CD4-positive, alpha-beta T cell (primary cell): ENCODE measurements at regions of chr3 and their contacts with region 1.

Region 1: GRCh38 chr3:125357032-125357658 is 18.0 kb downstream of the ZNF148 start:
- DNase-seq: peak; percentile 35 to 81 (median 52)
- ATAC-seq: peak; percentile 98
- H3K4me3 ChIP-seq: peak overlapping the region; percentile 55
- H3K4me3 Mint-ChIP-seq: peak overlapping the region; percentile 72
- H3K27ac ChIP-seq: peak overlapping the region in 1 of 2 donors; percentile 61
- H3K27ac Mint-ChIP-seq: peak overlapping the region; percentile 75
- H3K4me1 ChIP-seq: peaks cover 26% of the 10 kb centered on the region
- H3K4me1 Mint-ChIP-seq: peaks cover 77% of the 10 kb centered on the region
- H3K27me3 ChIP-seq: no peaks in the 10 kb centered on the region
- H3K27me3 Mint-ChIP-seq: no peaks in the 10 kb centered on the region
- CTCF ChIP-seq: no peak

Region 2: GRCh38 chr3:125310623-125311081 is 46.5 kb before region 1 on chr3:
- CTCF ChIA-PET with region 1: no interaction called
- POLR2A ChIA-PET with region 1: interaction called, 6 read pairs
- intact Hi-C with region 1: loop called in 1 of 2 experiments (anchors 5 kb)
- DNase-seq: peak; percentile 10 to 66 (median 38)
- ATAC-seq: peak; percentile 90
- H3K4me3 ChIP-seq: peak overlapping the region; percentile 52
- H3K4me3 Mint-ChIP-seq: peak overlapping the region; percentile 91
- H3K27ac ChIP-seq: peak overlapping the region; percentile 30 to 63
- H3K27ac Mint-ChIP-seq: peak overlapping the region; percentile 98
- H3K4me1 ChIP-seq: peaks cover 9% of the 10 kb centered on the region
- H3K4me1 Mint-ChIP-seq: peaks cover 58% of the 10 kb centered on the region
- H3K27me3 ChIP-seq: no peaks in the 10 kb centered on the region
- H3K27me3 Mint-ChIP-seq: no peaks in the 10 kb centered on the region
- CTCF ChIP-seq: no peak

Region 3: DNA sequence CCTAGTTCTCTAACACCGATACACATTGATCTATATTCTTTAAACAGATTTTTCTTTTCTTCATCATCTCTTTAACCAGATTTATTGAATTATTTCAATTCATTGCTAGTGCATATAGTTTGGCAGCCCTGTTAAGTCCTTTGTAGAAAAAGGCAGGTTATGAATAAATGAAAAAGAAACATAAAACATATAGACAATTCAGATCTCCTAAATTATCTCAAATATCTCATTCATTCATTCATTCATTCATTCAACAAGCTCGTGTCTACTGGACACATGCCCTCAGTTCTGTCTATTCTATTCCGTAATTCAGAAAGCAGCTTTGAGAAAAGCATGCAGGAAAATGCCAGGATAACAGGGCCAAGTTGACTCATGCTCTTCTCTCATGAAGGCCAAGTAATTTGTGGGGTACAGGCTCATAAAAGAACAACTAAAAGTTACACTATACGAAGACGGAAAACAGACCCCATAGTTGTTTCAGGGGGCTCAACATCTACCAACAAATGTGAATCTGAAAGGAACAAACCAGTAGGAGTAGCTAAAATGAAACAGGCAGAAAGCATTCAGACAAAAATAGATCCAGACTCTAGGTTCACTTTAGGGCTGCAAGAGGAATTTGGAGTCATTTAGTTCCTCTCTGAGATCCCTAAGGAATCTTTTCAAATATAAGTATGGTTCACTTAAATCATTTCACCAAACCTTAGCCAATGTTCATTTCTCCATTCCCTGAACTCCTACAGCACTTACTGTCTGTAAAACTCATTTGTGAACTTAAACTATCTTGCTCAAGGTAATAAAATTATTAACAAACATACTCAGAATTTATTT is 10.5 kb after region 1 on chr3:
- CTCF ChIA-PET with region 1: interaction called, 4 read pairs
- POLR2A ChIA-PET with region 1: interaction called, 13 read pairs
- intact Hi-C with region 1: no loop called
- DNase-seq: no peak
- ATAC-seq: no peak
- H3K4me3 ChIP-seq: no peak overlapping the region
- H3K4me3 Mint-ChIP-seq: no peak overlapping the region
- H3K27ac ChIP-seq: no peak overlapping the region
- H3K27ac Mint-ChIP-seq: peak overlapping the region; percentile 0
- H3K4me1 ChIP-seq: peaks cover 19% of the 10 kb centered on the region
- H3K4me1 Mint-ChIP-seq: peaks cover 88% of the 10 kb centered on the region
- H3K27me3 ChIP-seq: no peaks in the 10 kb centered on the region
- H3K27me3 Mint-ChIP-seq: no peaks in the 10 kb centered on the region
- CTCF ChIP-seq: no peak

Region 4: GRCh38 chr3:126530171-126531050 is 1173.3 kb after region 1 on chr3:
- CTCF ChIA-PET with region 1: no interaction called
- POLR2A ChIA-PET with region 1: no interaction called
- intact Hi-C with region 1: no loop called
- DNase-seq: peak in 1 of 14 experiments; percentile 20
- ATAC-seq: no peak
- H3K4me3 ChIP-seq: no peak overlapping the region
- H3K4me3 Mint-ChIP-seq: no peak overlapping the region
- H3K27ac ChIP-seq: no peak overlapping the region
- H3K27ac Mint-ChIP-seq: no peak overlapping the region
- H3K4me1 ChIP-seq: no peaks in the 10 kb centered on the region
- H3K4me1 Mint-ChIP-seq: no peaks in the 10 kb centered on the region
- H3K27me3 ChIP-seq: peaks cover 0 to 2% of the 10 kb centered on the region in 2 experiments
- H3K27me3 Mint-ChIP-seq: peaks cover 10% of the 10 kb centered on the region
- CTCF ChIP-seq: no peak